Endothelial cell of umbilical vein (primary cell): ENCODE measurements at regions of chr3 and their contacts with region 1.

Region 1: GRCh38 chr3:23017780-23018179 is 185.3 kb upstream of the UBE2E2 start:
- DNase-seq: no peak
- H3K4me3 ChIP-seq: no peak overlapping the region
- H3K27ac ChIP-seq: no peak overlapping the region
- H3K4me1 ChIP-seq: peaks cover 4% of the 10 kb centered on the region
- H3K27me3 ChIP-seq: no peaks in the 10 kb centered on the region
- CTCF ChIP-seq: no peak
- POLR2A ChIP-seq: no peak

Region 2: GRCh38 chr3:23103757-23104156 is 86.0 kb after region 1 on chr3:
- CTCF ChIA-PET with region 1: no interaction called
- POLR2A ChIA-PET with region 1: no interaction called
- dilution Hi-C with region 1: no loop called
- intact Hi-C with region 1: loop called (anchors 5 kb)
- DNase-seq: no peak
- H3K4me3 ChIP-seq: no peak overlapping the region
- H3K27ac ChIP-seq: no peak overlapping the region
- H3K4me1 ChIP-seq: peaks cover 30% of the 10 kb centered on the region
- H3K27me3 ChIP-seq: no peaks in the 10 kb centered on the region
- CTCF ChIP-seq: no peak
- POLR2A ChIP-seq: no peak

Region 3: GRCh38 chr3:23159929-23160328 is 142.1 kb after region 1 on chr3:
- CTCF ChIA-PET with region 1: no interaction called
- POLR2A ChIA-PET with region 1: no interaction called
- dilution Hi-C with region 1: no loop called
- intact Hi-C with region 1: loop called (anchors 10 kb)
- DNase-seq: peak; percentile 57
- H3K4me3 ChIP-seq: no peak overlapping the region
- H3K27ac ChIP-seq: peak overlapping the region; percentile 62
- H3K4me1 ChIP-seq: peaks cover 11% of the 10 kb centered on the region
- H3K27me3 ChIP-seq: no peaks in the 10 kb centered on the region
- CTCF ChIP-seq: no peak
- POLR2A ChIP-seq: no peak

Region 4: DNA sequence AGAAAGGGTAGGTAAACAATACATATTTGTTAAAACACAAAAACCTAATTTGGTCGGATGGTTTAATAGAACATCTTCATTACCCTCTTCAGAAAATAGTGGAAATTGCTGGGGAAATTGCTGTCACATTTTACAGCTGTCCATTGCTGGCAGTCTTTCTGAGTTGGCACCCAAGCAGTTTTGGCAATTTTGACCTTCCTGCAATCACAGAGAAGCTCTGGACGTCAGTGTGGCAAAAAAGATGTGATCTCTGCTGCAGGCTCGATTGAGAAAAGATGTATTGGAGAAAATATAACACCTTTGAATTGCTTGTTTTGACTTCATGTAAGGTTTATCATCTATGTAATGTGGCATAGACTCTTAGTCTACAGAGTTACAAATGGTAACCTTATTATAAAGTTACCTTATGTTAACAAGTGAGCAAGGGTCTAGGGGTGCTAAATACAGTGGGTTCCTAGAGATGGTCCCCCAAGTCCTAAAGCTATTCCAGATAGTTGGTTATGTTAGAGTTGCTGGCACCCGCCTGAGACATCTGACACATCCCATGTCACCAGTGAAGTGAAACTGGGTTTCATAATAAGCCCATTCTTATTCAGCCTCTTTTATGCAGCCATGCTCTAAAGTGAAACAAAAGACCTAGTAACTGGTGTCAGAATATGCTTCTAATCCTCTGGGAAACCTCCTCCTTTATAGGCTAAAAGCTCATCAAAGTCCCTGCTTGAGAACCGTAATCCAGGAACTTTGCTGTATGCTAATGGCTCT is 802.0 kb after region 1 on chr3:
- CTCF ChIA-PET with region 1: no interaction called
- POLR2A ChIA-PET with region 1: no interaction called
- dilution Hi-C with region 1: no loop called
- intact Hi-C with region 1: no loop called
- DNase-seq: no peak
- H3K4me3 ChIP-seq: no peak overlapping the region
- H3K27ac ChIP-seq: no peak overlapping the region
- H3K4me1 ChIP-seq: peaks cover 11% of the 10 kb centered on the region
- H3K27me3 ChIP-seq: no peaks in the 10 kb centered on the region
- CTCF ChIP-seq: no peak
- POLR2A ChIP-seq: no peak